CD8-positive, alpha-beta T cell (primary cell): ENCODE measurements at regions of chr22 and their contacts with region 1.

Region 1: GRCh38 chr22:50326959-50327710 is at the start of gene DENND6B:
- DNase-seq: peak; percentile 34 to 85 (median 64)
- ATAC-seq: peak; percentile 94
- H3K4me3 ChIP-seq: peak within 1 kb of the TSS; percentile 45 to 69
- H3K4me3 Mint-ChIP-seq: peak within 1 kb of the TSS; percentile 83
- H3K27ac ChIP-seq: peak within 1 kb of the TSS; percentile 23 to 37
- H3K27ac Mint-ChIP-seq: peak within 1 kb of the TSS; percentile 84
- H3K4me1 ChIP-seq: peaks cover 10% of the 10 kb centered on the region
- H3K4me1 Mint-ChIP-seq: peaks cover 12% of the 10 kb centered on the region
- H3K27me3 ChIP-seq: no peaks in the 10 kb centered on the region
- H3K27me3 Mint-ChIP-seq: peaks cover 2% of the 10 kb centered on the region
- CTCF ChIP-seq: peak; percentile 65
- total RNA-seq, gene DENND6B: 3.0 to 3.1 TPM

Region 2: DNA sequence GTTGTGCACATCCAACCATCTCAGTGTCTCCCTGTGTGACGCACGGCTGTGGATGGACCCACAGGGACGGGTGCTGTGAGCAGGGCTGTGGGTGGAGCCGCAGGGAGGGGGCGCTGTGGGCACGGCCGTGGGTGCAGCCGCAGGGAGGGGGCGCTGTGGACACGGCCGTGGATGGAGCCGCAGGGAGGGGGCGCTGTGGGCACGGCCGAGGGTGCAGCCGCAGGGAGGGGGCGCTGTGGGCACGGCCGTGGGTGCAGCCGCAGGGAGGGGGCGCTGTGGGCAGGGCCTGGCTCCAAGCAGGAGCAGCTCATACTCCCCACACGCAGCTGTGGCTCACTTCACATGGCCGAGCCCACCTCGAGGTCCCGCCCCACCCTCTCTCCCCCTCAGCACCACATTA is 51.0 kb before region 1 on chr22:
- CTCF ChIA-PET with region 1: interaction called, 20 read pairs
- POLR2A ChIA-PET with region 1: no interaction called
- intact Hi-C with region 1: loop called in 1 of 2 experiments (anchors 1 kb)
- DNase-seq: peak in 4 of 9 experiments; percentile 41 to 81 (median 70)
- ATAC-seq: peak; percentile 74
- H3K4me3 ChIP-seq: no peak overlapping the region
- H3K4me3 Mint-ChIP-seq: no peak overlapping the region
- H3K27ac ChIP-seq: no peak overlapping the region
- H3K27ac Mint-ChIP-seq: no peak overlapping the region
- H3K4me1 ChIP-seq: peaks cover 10% of the 10 kb centered on the region
- H3K4me1 Mint-ChIP-seq: peaks cover 3% of the 10 kb centered on the region
- H3K27me3 ChIP-seq: no peaks in the 10 kb centered on the region
- H3K27me3 Mint-ChIP-seq: peaks cover 3% of the 10 kb centered on the region
- CTCF ChIP-seq: peak; percentile 41

Region 3: DNA sequence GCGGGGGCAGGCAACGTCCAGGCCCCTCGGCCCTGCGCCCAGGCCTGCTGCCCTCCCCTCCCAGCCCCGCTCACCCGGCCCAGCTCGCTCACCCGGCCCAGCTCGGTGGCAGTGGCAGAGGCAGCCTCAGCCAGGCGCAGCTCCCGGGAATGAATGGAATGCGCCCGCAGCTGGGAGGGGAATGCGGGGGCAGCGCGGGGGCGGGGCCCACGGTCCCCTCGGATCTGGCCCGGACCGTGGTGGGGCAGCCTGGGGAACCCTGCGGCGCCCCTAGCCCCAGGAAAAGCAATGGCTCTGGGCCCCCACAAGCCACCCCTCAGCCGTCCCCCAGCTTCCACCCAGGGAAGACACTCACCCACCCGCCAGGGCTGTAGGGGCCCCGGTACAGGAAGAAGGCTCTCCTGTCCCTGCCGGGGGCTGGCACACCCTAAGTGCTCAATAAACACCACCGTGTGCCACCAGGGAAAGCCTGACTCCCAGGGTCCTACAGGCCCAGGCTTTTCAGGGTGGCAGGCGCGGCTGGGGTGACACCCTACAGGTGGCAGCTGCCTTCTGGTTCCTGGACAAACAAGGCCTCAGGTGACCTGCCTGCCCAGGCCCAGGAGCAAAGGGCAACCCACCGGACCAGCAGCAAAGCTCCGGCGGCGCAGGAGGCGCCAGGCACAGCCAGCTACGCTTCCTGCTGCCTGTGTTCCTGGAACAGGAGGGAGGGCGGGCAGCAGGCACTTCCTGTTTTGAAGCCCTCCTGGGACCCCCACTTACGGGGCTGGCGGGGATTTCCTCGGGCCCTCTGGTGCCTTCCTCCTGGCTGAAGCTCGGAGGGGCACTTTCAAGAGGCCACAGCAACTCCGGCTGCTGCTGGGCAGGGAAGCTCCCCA is 33.5 kb before region 1 on chr22:
- CTCF ChIA-PET with region 1: interaction called, 10 read pairs
- POLR2A ChIA-PET with region 1: interaction called, 3 read pairs
- intact Hi-C with region 1: no loop called
- DNase-seq: peak in 2 of 9 experiments; percentile 19 to 54
- ATAC-seq: peak; percentile 50
- H3K4me3 ChIP-seq: peak overlapping the region; percentile 20 to 50
- H3K4me3 Mint-ChIP-seq: peak overlapping the region; percentile 39
- H3K27ac ChIP-seq: peak overlapping the region in 1 of 2 experiments; percentile 15
- H3K27ac Mint-ChIP-seq: no peak overlapping the region
- H3K4me1 ChIP-seq: peaks cover 23% of the 10 kb centered on the region
- H3K4me1 Mint-ChIP-seq: peaks cover 15% of the 10 kb centered on the region
- H3K27me3 ChIP-seq: peaks cover 0 to 4% of the 10 kb centered on the region in 2 experiments
- H3K27me3 Mint-ChIP-seq: peaks cover 10% of the 10 kb centered on the region
- CTCF ChIP-seq: no peak

Region 4: GRCh38 chr22:50314455-50315288 is 12.5 kb before region 1 on chr22:
- CTCF ChIA-PET with region 1: interaction called, 15 read pairs
- POLR2A ChIA-PET with region 1: interaction called, 7 read pairs
- intact Hi-C with region 1: no loop called
- DNase-seq: peak; percentile 41 to 86 (median 76)
- ATAC-seq: peak; percentile 94
- H3K4me3 ChIP-seq: peak overlapping the region; percentile 44 to 51
- H3K4me3 Mint-ChIP-seq: peak overlapping the region; percentile 81
- H3K27ac ChIP-seq: peak overlapping the region; percentile 51 to 70
- H3K27ac Mint-ChIP-seq: peak overlapping the region; percentile 93
- H3K4me1 ChIP-seq: peaks cover 19% of the 10 kb centered on the region
- H3K4me1 Mint-ChIP-seq: peaks cover 16% of the 10 kb centered on the region
- H3K27me3 ChIP-seq: no peaks in the 10 kb centered on the region
- H3K27me3 Mint-ChIP-seq: no peaks in the 10 kb centered on the region
- CTCF ChIP-seq: no peak